ENCODE measurements at regions of chr7 and their contacts with region 1.

Region 1: DNA sequence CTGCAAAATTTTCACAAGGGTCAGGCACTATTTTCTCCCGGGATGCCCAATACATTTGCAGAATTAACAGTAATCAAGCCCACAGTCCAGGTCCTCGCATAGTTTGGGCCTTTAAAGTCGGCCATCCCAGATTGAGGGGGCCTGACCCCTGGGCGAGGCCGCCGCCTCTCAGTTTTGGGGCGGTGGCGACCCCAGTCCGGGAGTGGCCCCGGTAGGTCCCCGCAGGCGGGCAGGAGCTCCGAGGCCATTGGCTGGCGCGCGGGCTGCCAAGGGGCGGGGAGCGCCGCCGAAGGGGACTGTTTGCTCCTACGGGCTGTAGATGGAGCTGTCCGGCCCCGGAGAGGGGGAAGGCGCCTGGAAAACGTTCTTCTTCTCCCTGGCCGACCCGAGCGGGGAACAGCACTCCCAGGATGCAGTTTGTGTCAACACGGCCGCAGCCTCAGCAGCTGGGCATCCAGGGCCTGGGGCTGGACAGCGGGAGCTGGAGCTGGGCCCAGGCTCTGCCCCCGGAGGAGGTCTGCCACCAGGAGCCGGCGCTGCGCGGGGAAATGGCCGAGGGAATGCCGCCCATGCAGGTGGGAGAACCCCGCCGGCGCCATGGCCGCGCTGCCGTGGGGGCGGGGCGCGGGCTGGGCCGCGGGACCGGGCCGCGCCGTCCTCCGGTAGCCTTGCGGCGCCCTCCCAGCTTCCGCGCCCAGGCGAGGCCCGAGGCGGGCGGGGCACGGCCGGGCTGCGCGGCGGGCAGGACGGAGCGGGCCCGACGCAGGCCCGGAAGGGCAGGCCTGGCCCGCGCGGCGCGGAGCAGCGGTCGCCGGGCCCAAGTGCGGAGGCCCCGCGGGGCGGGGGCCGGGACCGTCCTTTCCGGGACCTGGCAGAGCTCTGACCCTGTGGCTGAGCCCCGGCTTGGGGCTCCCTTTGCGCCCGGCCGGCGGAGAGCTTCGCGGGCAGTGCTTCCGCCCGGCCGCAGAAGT is at the start of gene ZNF282:
- DNase-seq: peak; percentile 85
- ATAC-seq: peak; percentile 95
- H3K4me3 ChIP-seq: peak within 1 kb of the TSS; percentile 81 to 92 (median 90)
- H3K27ac ChIP-seq: peak within 1 kb of the TSS; percentile 86
- H3K4me1 ChIP-seq: peaks cover 25% of the 10 kb centered on the region
- H3K27me3 ChIP-seq: peaks cover 0 to 1% of the 10 kb centered on the region in 2 experiments; a peak in 1 of 5 replicates
- CTCF ChIP-seq: peak; percentile 92
- EP300 ChIP-seq: no peak; a peak in 1 of 4 replicates
- POLR2A ChIP-seq: peak; percentile 77 to 80
- RAD21 ChIP-seq: peak; percentile 84
- total RNA-seq, gene ZNF282: 19.3 and 20.9 TPM in 2 replicates

Region 2: GRCh38 chr7:149239345-149240191 is 44.1 kb after region 1 on chr7 and contains the start of gene ZNF212:
- CTCF ChIA-PET with region 1: no interaction called
- POLR2A ChIA-PET with region 1: no interaction called
- in situ Hi-C with region 1: no loop called
- intact Hi-C with region 1: loop called (anchors 5 kb)
- DNase-seq: peak; percentile 86
- ATAC-seq: peak; percentile 100
- H3K4me3 ChIP-seq: peak within 1 kb of the TSS; percentile 86 to 94 (median 90)
- H3K27ac ChIP-seq: peak within 1 kb of the TSS; percentile 50
- H3K4me1 ChIP-seq: peaks cover 44% of the 10 kb centered on the region
- H3K27me3 ChIP-seq: no peaks in the 10 kb centered on the region; a peak in 1 of 5 replicates
- CTCF ChIP-seq: peak; percentile 99
- EP300 ChIP-seq: peak in 1 of 2 experiments; percentile 10; a peak in 1 of 4 replicates
- POLR2A ChIP-seq: peak; percentile 47 to 71; a peak in 2 of 4 replicates
- RAD21 ChIP-seq: peak; percentile 57
- total RNA-seq, gene ZNF212: 3.8 and 4.3 TPM in 2 replicates

Measured in HepG2 (cell line).